ENCODE measurements at regions of chr15 and their contacts with region 1.

Region 1: DNA sequence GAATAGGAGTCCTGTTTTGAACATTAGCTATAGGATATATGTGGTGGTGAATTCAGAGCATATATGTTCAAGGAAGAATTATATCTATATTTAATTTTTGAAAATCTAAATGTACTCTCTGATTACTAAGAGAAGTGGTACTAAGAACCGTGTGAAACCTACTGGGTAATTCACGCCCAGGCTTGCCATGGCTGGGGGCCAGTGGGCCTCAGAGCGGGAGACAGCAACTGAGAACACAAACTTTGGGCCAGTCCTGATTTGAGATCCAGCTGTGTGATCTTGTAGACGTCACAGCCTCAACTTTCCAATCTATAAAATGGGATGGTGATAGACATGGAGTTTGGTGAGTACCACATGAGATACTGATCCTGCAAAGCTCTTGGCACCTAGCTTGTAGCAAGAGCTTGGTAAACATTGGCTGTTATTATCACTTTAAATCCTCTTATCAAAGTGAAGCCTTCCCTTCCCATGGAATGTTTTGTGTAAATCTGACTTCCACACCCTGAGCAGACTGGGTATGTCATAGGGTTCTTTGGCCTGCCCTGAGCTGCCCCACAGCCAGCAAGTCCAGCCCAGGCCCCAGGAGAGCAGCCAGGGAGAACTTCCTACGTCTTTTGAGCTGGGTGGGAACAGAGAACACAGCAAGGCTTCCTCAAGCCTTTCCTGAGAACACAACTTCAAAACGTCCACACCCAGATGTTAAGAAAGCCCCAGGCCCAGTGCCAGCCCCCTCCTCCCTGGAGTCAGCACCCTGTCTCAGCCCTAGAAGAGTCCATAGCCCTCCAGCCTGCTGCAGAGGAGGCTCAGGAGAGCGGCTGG is 8.2 kb upstream of the PAQR5 start:
- DNase-seq: no peak
- H3K4me3 ChIP-seq: no peak overlapping the region
- H3K27ac ChIP-seq: no peak overlapping the region
- H3K4me1 ChIP-seq: 0 out of 7 replicates have a peak, but pooled peaks cover 0 to 2% (median 0%) of the 10 kb centered on the region in 4 experiments
- H3K27me3 ChIP-seq: no peaks in the 10 kb centered on the region; a peak in 2 of 7 replicates
- CTCF ChIP-seq: no peak
- EP300 ChIP-seq: no peak
- POLR2A ChIP-seq: no peak
- RAD21 ChIP-seq: no peak

Region 2: GRCh38 chr15:69275074-69275670 is 15.4 kb before region 1 on chr15:
- CTCF ChIA-PET with region 1: interaction called, 21 read pairs
- POLR2A ChIA-PET with region 1: no interaction called
- DNase-seq: no peak
- H3K4me3 ChIP-seq: no peak overlapping the region
- H3K27ac ChIP-seq: no peak overlapping the region
- H3K4me1 ChIP-seq: peaks cover 2 to 13% (median 6%) of the 10 kb centered on the region in 4 experiments; a peak in 5 of 7 replicates
- H3K27me3 ChIP-seq: no peaks in the 10 kb centered on the region
- CTCF ChIP-seq: no peak
- EP300 ChIP-seq: no peak
- POLR2A ChIP-seq: no peak
- RAD21 ChIP-seq: no peak

Region 3: GRCh38 chr15:69311319-69311721 is 20.8 kb after region 1 on chr15:
- CTCF ChIA-PET with region 1: no interaction called
- POLR2A ChIA-PET with region 1: no interaction called
- DNase-seq: no peak
- H3K4me3 ChIP-seq: no peak overlapping the region
- H3K27ac ChIP-seq: no peak overlapping the region
- H3K4me1 ChIP-seq: peaks cover 0 to 4% (median 0%) of the 10 kb centered on the region in 4 experiments; a peak in 3 of 7 replicates
- H3K27me3 ChIP-seq: no peaks in the 10 kb centered on the region
- CTCF ChIP-seq: no peak
- EP300 ChIP-seq: no peak
- POLR2A ChIP-seq: no peak
- RAD21 ChIP-seq: no peak

Region 4: GRCh38 chr15:69578792-69579587 is 288.4 kb after region 1 on chr15:
- CTCF ChIA-PET with region 1: no interaction called
- POLR2A ChIA-PET with region 1: no interaction called
- DNase-seq: no peak
- H3K4me3 ChIP-seq: no peak overlapping the region
- H3K27ac ChIP-seq: no peak overlapping the region
- H3K4me1 ChIP-seq: no peaks in the 10 kb centered on the region; a peak in 1 of 7 replicates
- H3K27me3 ChIP-seq: no peaks in the 10 kb centered on the region
- CTCF ChIP-seq: no peak
- EP300 ChIP-seq: no peak
- POLR2A ChIP-seq: no peak
- RAD21 ChIP-seq: no peak